ENCODE measurements at regions of chr5 and their contacts with region 1.

Region 1: GRCh38 chr5:128905571-128906110 is 59.6 kb upstream of the SLC27A6 start:
- DNase-seq: peak; percentile 30
- H3K4me3 ChIP-seq: no peak overlapping the region
- H3K27ac ChIP-seq: no peak overlapping the region
- H3K4me1 ChIP-seq: no peaks in the 10 kb centered on the region
- H3K27me3 ChIP-seq: no peaks in the 10 kb centered on the region
- CTCF ChIP-seq: peak; percentile 56

Region 2: GRCh38 chr5:128711216-128711615 is 194.4 kb before region 1 on chr5:
- intact Hi-C with region 1: no loop called
- DNase-seq: no peak
- H3K4me3 ChIP-seq: no peak overlapping the region
- H3K27ac ChIP-seq: no peak overlapping the region
- H3K4me1 ChIP-seq: no peaks in the 10 kb centered on the region
- H3K27me3 ChIP-seq: no peaks in the 10 kb centered on the region
- CTCF ChIP-seq: no peak

Region 3: DNA sequence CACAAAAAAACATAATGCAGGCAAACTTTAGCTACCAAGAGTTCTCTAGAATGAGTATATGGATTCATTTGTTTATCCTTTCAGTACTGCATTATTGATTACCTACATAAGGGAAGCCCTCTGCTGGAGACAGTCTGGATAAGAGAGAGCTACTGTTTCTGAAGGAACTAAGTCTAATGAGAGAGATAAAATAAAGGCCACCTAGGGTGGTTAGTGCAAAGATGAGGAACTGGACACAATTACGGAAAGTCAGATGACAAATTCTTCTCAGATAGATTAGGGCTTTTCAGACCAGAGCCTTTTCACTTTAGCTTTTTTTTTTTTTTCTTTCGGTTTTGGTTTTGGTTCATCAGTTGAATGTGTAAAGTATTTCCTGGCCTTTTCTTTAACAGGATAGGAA is 220.2 kb after region 1 on chr5:
- intact Hi-C with region 1: loop called (anchors 10 kb)
- DNase-seq: no peak
- H3K4me3 ChIP-seq: no peak overlapping the region
- H3K27ac ChIP-seq: no peak overlapping the region
- H3K4me1 ChIP-seq: no peaks in the 10 kb centered on the region
- H3K27me3 ChIP-seq: no peaks in the 10 kb centered on the region
- CTCF ChIP-seq: no peak